Activated T-helper 2 cell treated with anti-CD3 and anti-CD28 coated beads, Interferon-gamma antibody, Interleukin-2, Interleukin-4, amounts not matched to agents 10 μg/mL and 5 μg/mL and 100 μg/mL, durations not matched to agents 14 hours and 24 hours and 36 hours (primary cell): ENCODE measurements at regions of chr3 and their contacts with region 1.

Region 1: GRCh38 chr3:122392868-122393844 is 9.2 kb downstream of the FAM162A start:
- DNase-seq: no peak
- H3K4me3 Mint-ChIP-seq: no peak overlapping the region
- H3K27ac Mint-ChIP-seq: no peak overlapping the region
- H3K4me1 Mint-ChIP-seq: peaks cover 54% of the 10 kb centered on the region
- H3K27me3 Mint-ChIP-seq: no peaks in the 10 kb centered on the region

Region 2: GRCh38 chr3:121718205-121718846 is 674.8 kb before region 1 on chr3:
- intact Hi-C with region 1: no loop called
- DNase-seq: no peak
- H3K4me3 Mint-ChIP-seq: no peak overlapping the region
- H3K27ac Mint-ChIP-seq: no peak overlapping the region
- H3K4me1 Mint-ChIP-seq: peaks cover 15% of the 10 kb centered on the region
- H3K27me3 Mint-ChIP-seq: no peaks in the 10 kb centered on the region

Region 3: GRCh38 chr3:122415720-122416654 is 22.8 kb after region 1 on chr3 and contains the start of gene WDR5B:
- intact Hi-C with region 1: loop called (anchors 2 kb)
- DNase-seq: peak; percentile 97
- H3K4me3 Mint-ChIP-seq: peak within 1 kb of the TSS; percentile 93
- H3K27ac Mint-ChIP-seq: peak within 1 kb of the TSS; percentile 95
- H3K4me1 Mint-ChIP-seq: peaks cover 22% of the 10 kb centered on the region
- H3K27me3 Mint-ChIP-seq: no peaks in the 10 kb centered on the region
- total RNA-seq, gene WDR5B: 4.9 and 5.5 TPM in 2 replicates

Region 4: GRCh38 chr3:122564155-122564912 is 171.2 kb after region 1 on chr3 and contains the starts of genes DTX3L and PARP9:
- intact Hi-C with region 1: loop called (anchors 5 kb)
- DNase-seq: peak; percentile 84
- H3K4me3 Mint-ChIP-seq: peak within 1 kb of the TSS; percentile 97
- H3K27ac Mint-ChIP-seq: peak within 1 kb of the TSS; percentile 95
- H3K4me1 Mint-ChIP-seq: peaks cover 65% of the 10 kb centered on the region
- H3K27me3 Mint-ChIP-seq: no peaks in the 10 kb centered on the region
- total RNA-seq, gene DTX3L: 32.4 and 34.3 TPM in 2 replicates
- total RNA-seq, gene PARP9: 29.8 and 31.0 TPM in 2 replicates

Region 5: GRCh38 chr3:122609798-122610559 is 216.8 kb after region 1 on chr3:
- intact Hi-C with region 1: no loop called
- DNase-seq: peak; percentile 22
- H3K4me3 Mint-ChIP-seq: peak overlapping the region; percentile 56
- H3K27ac Mint-ChIP-seq: peak overlapping the region; percentile 88
- H3K4me1 Mint-ChIP-seq: peaks cover 24% of the 10 kb centered on the region
- H3K27me3 Mint-ChIP-seq: no peaks in the 10 kb centered on the region

Region 6: DNA sequence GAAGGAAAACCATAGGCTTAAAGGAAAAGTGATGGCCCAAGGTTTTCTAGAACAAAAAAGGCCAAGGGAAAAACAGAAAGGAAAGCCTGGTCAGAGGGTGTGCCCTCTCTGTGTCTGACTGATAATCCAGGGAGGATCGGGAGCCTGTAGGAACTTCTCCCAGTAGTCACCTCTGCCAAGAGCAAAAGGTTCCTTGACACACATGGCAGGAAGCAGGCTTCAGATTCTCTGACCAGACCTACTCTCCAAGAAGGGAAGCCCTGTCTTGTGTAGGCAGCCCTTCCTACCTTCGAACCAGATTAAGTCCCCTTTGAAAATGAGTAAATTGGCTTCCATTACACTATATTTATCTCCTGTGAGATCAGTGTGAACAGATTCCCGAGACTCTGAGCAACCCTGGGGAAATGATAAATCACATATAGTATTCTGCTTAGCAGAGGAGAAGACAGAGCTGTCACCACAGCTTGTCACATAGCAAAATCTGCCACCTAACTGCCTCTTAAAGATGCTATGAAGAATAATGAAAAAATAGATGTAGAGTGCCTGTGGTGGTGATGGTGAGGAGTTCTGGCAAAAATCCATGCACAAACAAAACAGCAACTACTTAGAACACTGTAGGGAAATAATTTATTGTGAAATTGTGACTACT is 326.2 kb after region 1 on chr3:
- intact Hi-C with region 1: no loop called
- DNase-seq: no peak
- H3K4me3 Mint-ChIP-seq: no peak overlapping the region
- H3K27ac Mint-ChIP-seq: no peak overlapping the region
- H3K4me1 Mint-ChIP-seq: no peaks in the 10 kb centered on the region
- H3K27me3 Mint-ChIP-seq: no peaks in the 10 kb centered on the region